IMR-90 (cell line): ENCODE measurements at regions of chr10 and their contacts with region 1.

Region 1: GRCh38 chr10:95831515-95831914 is 75.6 kb downstream of the ENTPD1 start:
- DNase-seq: no peak
- ATAC-seq: no peak
- H3K4me3 ChIP-seq: no peak overlapping the region
- H3K27ac ChIP-seq: no peak overlapping the region; the same call in 1 of the 2 replicates
- H3K4me1 ChIP-seq: peaks cover 7% of the 10 kb centered on the region
- H3K27me3 ChIP-seq: no peaks in the 10 kb centered on the region
- CTCF ChIP-seq: no peak
- POLR2A ChIP-seq: no peak
- RAD21 ChIP-seq: no peak

Region 2: DNA sequence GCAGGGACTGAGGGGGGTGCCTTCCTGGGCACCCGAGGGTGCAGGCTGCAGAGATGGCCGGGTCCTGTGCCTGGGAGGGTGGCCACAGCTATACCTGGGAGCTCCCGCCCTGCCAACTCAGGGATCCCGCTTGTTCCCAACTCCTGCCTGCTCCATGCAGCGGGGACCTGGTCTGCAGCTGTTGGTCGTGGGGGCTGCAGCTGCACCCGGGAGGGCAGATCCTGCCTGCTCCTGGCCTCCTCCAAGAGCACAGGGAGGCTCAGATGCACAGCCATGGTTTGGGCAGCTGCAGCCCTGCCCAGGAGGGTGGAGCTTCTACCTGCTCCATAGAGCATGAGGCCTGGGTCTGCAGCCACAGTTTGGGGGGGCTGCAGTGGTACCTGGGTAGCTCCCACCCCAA is 124.5 kb before region 1 on chr10:
- CTCF ChIA-PET with region 1: no interaction called
- POLR2A ChIA-PET with region 1: no interaction called
- dilution Hi-C with region 1: no loop called
- in situ Hi-C with region 1: no loop called
- intact Hi-C with region 1: no loop called
- DNase-seq: no peak
- ATAC-seq: no peak
- H3K4me3 ChIP-seq: no peak overlapping the region
- H3K27ac ChIP-seq: no peak overlapping the region
- H3K4me1 ChIP-seq: peaks cover 2% of the 10 kb centered on the region; the same call in 1 of the 2 replicates
- H3K27me3 ChIP-seq: no peaks in the 10 kb centered on the region
- CTCF ChIP-seq: no peak
- POLR2A ChIP-seq: no peak
- RAD21 ChIP-seq: no peak

Region 3: GRCh38 chr10:95907456-95908253 is 76.1 kb after region 1 on chr10 and contains the start of gene CC2D2B:
- CTCF ChIA-PET with region 1: interaction called, 3 read pairs
- POLR2A ChIA-PET with region 1: no interaction called
- dilution Hi-C with region 1: no loop called
- in situ Hi-C with region 1: no loop called
- intact Hi-C with region 1: loop called (anchors 2 kb)
- DNase-seq: peak; percentile 74
- ATAC-seq: peak; percentile 96
- H3K4me3 ChIP-seq: peak within 1 kb of the TSS; percentile 85
- H3K27ac ChIP-seq: peak within 1 kb of the TSS; percentile 79
- H3K4me1 ChIP-seq: no peaks in the 10 kb centered on the region
- H3K27me3 ChIP-seq: no peaks in the 10 kb centered on the region
- CTCF ChIP-seq: peak; percentile 23; the same call in 1 of the 2 replicates
- POLR2A ChIP-seq: no peak
- RAD21 ChIP-seq: no peak
- total RNA-seq, gene CC2D2B: not detected in 2 replicates